IMR-90 (cell line): ENCODE measurements at regions of chr1 and their contacts with region 1.

Region 1: GRCh38 chr1:214957330-214958137 is 125.0 kb upstream of the KCNK2 start:
- DNase-seq: peak; percentile 100
- ATAC-seq: peak; percentile 82
- H3K4me3 ChIP-seq: peak overlapping the region; percentile 16; the same call in 1 of the 2 replicates
- H3K27ac ChIP-seq: peak overlapping the region; percentile 95
- H3K4me1 ChIP-seq: peaks cover 10% of the 10 kb centered on the region
- H3K27me3 ChIP-seq: no peaks in the 10 kb centered on the region
- CTCF ChIP-seq: no peak
- POLR2A ChIP-seq: peak; percentile 89
- RAD21 ChIP-seq: peak; percentile 28; the same call in 1 of the 2 replicates

Region 2: DNA sequence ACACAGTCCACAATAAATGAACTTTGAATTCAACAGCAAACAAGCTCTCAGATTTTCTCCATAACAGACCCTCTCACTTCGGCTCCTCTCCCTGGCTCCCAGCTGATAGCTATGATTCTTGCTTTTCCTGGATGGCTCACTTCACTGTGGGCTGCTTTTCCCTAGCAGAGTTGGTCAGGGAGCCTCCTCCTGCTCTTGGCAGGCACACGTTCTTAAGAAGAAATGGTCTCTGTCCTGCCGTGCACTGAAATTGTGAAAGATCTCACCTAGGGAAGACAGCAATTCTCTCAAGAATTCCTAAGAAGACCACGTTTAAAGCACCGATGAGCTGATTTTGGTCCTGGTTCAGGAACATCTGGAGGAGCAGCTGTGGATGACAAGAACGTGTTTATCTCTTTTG is 23.5 kb before region 1 on chr1:
- CTCF ChIA-PET with region 1: no interaction called
- POLR2A ChIA-PET with region 1: no interaction called
- dilution Hi-C with region 1: no loop called
- in situ Hi-C with region 1: no loop called
- intact Hi-C with region 1: no loop called
- DNase-seq: no peak
- ATAC-seq: no peak
- H3K4me3 ChIP-seq: no peak overlapping the region
- H3K27ac ChIP-seq: no peak overlapping the region
- H3K4me1 ChIP-seq: no peaks in the 10 kb centered on the region
- H3K27me3 ChIP-seq: no peaks in the 10 kb centered on the region
- CTCF ChIP-seq: no peak
- POLR2A ChIP-seq: no peak
- RAD21 ChIP-seq: no peak

Region 3: DNA sequence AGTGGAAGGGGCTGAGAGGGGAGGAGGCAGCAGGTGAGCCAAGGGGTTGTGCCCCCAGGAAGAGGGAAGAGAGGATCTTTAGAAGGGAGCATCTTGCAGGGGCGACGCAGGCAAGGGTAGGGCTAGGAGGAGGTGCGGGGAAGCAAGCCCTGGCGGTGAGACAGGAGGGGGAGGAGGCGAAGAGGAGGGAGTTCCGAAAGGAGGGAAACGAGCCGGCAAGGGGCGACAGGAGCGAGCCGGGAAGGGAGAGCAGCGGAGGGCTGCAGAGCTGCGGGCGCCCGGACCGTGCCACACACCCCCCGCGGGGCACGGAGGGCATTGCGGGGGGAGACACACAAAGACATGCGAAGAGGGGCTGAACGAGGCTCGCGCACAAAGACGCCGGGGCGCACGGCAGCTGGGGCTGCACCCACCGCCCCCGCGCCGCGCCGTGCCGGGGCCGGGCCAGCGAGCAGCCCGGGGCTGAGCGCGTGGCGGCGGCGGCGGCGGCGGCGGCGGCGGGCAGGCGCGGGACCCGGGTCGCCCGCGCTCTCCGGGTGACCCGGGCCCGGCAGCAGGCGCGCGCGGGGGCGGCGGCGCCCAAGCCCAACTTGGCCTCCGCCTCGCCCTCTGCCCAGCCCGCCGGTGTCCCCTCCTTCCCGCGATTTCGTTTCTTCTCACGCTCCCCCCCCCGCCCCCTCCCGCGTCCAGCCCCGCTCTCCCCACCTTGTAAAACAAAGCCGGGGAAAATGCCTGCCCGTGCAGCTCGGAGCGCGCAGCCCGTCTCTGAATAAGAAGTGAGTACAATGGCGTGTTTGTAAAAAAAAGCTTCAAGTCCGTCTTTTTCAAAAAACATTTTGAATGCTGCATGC is 125.2 kb after region 1 on chr1 and contains the start of gene KCNK2:
- CTCF ChIA-PET with region 1: no interaction called
- POLR2A ChIA-PET with region 1: no interaction called
- dilution Hi-C with region 1: no loop called
- in situ Hi-C with region 1: no loop called
- intact Hi-C with region 1: loop called (anchors 5 kb)
- DNase-seq: peak; percentile 52
- ATAC-seq: peak; percentile 76
- H3K4me3 ChIP-seq: peak within 1 kb of the TSS; percentile 85
- H3K27ac ChIP-seq: peak within 1 kb of the TSS; percentile 39; the same call in 1 of the 2 replicates
- H3K4me1 ChIP-seq: peaks cover 2% of the 10 kb centered on the region; the same call in 1 of the 2 replicates
- H3K27me3 ChIP-seq: peaks cover 4% of the 10 kb centered on the region; the same call in 1 of the 2 replicates
- CTCF ChIP-seq: no peak
- POLR2A ChIP-seq: no peak
- RAD21 ChIP-seq: no peak
- total RNA-seq, gene KCNK2: 86.9 TPM in 2 replicates

Region 4: GRCh38 chr1:215146341-215146826 is 188.8 kb after region 1 on chr1:
- CTCF ChIA-PET with region 1: no interaction called
- POLR2A ChIA-PET with region 1: no interaction called
- dilution Hi-C with region 1: no loop called
- in situ Hi-C with region 1: no loop called
- intact Hi-C with region 1: loop called (anchors 5 kb)
- DNase-seq: peak; percentile 64
- ATAC-seq: no peak
- H3K4me3 ChIP-seq: no peak overlapping the region
- H3K27ac ChIP-seq: no peak overlapping the region
- H3K4me1 ChIP-seq: no peaks in the 10 kb centered on the region
- H3K27me3 ChIP-seq: no peaks in the 10 kb centered on the region
- CTCF ChIP-seq: peak; percentile 74
- POLR2A ChIP-seq: no peak
- RAD21 ChIP-seq: peak; percentile 76